ENCODE measurements at regions of chr2 and their contacts with region 1.

Region 1: GRCh38 chr2:43461453-43462073 is 134.3 kb downstream of the THADA start:
- DNase-seq: no peak
- H3K4me3 ChIP-seq: no peak overlapping the region
- H3K27ac ChIP-seq: peak overlapping the region; percentile 20 to 26
- H3K4me1 ChIP-seq: peaks cover 5% of the 10 kb centered on the region
- H3K27me3 ChIP-seq: no peaks in the 10 kb centered on the region
- CTCF ChIP-seq: no peak
- POLR2A ChIP-seq: no peak

Region 2: GRCh38 chr2:42964439-42965083 is 497.0 kb before region 1 on chr2:
- intact Hi-C with region 1: no loop called
- DNase-seq: no peak
- H3K4me3 ChIP-seq: no peak overlapping the region
- H3K27ac ChIP-seq: no peak overlapping the region
- H3K4me1 ChIP-seq: peaks cover 10% of the 10 kb centered on the region
- H3K27me3 ChIP-seq: no peaks in the 10 kb centered on the region
- CTCF ChIP-seq: no peak
- POLR2A ChIP-seq: no peak

Region 3: GRCh38 chr2:43412121-43412753 is 49.3 kb before region 1 on chr2:
- intact Hi-C with region 1: loop called (anchors 5 kb)
- DNase-seq: no peak
- H3K4me3 ChIP-seq: no peak overlapping the region
- H3K27ac ChIP-seq: peak overlapping the region in 1 of 2 donors; percentile 8
- H3K4me1 ChIP-seq: peaks cover 14% of the 10 kb centered on the region
- H3K27me3 ChIP-seq: no peaks in the 10 kb centered on the region
- CTCF ChIP-seq: no peak
- POLR2A ChIP-seq: no peak

Region 4: DNA sequence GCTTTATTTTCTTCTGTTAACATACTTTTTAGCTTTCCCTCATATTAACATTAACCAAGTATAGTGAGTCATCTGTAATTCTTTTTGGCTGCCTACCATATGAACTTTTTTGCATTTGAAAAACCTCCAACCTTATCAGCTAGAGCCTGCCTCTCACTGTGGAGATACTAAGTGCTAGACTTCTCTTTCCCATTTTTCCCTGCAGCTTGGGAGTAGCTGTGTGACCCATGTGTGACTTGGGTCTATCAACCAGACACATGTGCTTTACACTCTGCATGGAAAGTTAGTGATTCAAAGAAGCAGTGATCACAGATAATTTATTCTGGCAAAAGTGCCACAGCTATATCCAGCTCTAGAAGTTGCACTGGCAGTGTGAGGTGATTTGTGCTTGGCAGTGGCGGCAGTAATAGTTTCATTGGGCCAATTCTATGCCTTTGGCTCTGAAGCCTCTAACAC is 863.4 kb after region 1 on chr2:
- intact Hi-C with region 1: no loop called
- DNase-seq: no peak
- H3K4me3 ChIP-seq: no peak overlapping the region
- H3K27ac ChIP-seq: no peak overlapping the region
- H3K4me1 ChIP-seq: no peaks in the 10 kb centered on the region
- H3K27me3 ChIP-seq: no peaks in the 10 kb centered on the region
- CTCF ChIP-seq: no peak
- POLR2A ChIP-seq: no peak